ENCODE measurements at regions of chr1 and their contacts with region 1.

Region 1: GRCh38 chr1:205211169-205211838 is at the start of gene DSTYK:
- DNase-seq: peak; percentile 90 to 97 (median 95)
- H3K4me3 ChIP-seq: peak within 1 kb of the TSS; percentile 67 to 100 (median 96)
- H3K27ac ChIP-seq: peak within 1 kb of the TSS; percentile 78 to 99 (median 94)
- H3K27me3 ChIP-seq: no peaks in the 10 kb centered on the region
- CTCF ChIP-seq: peak in 40 of 56 donors; percentile 10 to 60 (median 40)
- total RNA-seq, gene DSTYK: 28.0 to 49.3 (median 39.9) TPM

Region 2: GRCh38 chr1:205121660-205122488 is 89.4 kb before region 1 on chr1 and contains the start of gene RBBP5:
- intact Hi-C with region 1: loop called (anchors 1 to 2 kb)
- DNase-seq: peak; percentile 92 to 97 (median 95)
- H3K4me3 ChIP-seq: peak within 1 kb of the TSS; percentile 72 to 100 (median 92)
- H3K27ac ChIP-seq: peak within 1 kb of the TSS; percentile 86 to 100 (median 98)
- H3K27me3 ChIP-seq: no peaks in the 10 kb centered on the region
- CTCF ChIP-seq: peak; percentile 39 to 91 (median 75)
- total RNA-seq, gene RBBP5: 14.3 to 46.6 (median 24.8) TPM

Region 3: GRCh38 chr1:205141236-205142101 is 69.8 kb before region 1 on chr1:
- intact Hi-C with region 1: loop called in 1 of 2 experiments (anchors 5 kb)
- DNase-seq: peak; percentile 47 to 88 (median 72)
- H3K4me3 ChIP-seq: peak overlapping the region in 32 of 59 donors; percentile 1 to 52 (median 23)
- H3K27ac ChIP-seq: peak overlapping the region in 45 of 59 donors; percentile 13 to 71 (median 46)
- H3K27me3 ChIP-seq: no peaks in the 10 kb centered on the region
- CTCF ChIP-seq: peak; percentile 64 to 92 (median 84)

Region 4: DNA sequence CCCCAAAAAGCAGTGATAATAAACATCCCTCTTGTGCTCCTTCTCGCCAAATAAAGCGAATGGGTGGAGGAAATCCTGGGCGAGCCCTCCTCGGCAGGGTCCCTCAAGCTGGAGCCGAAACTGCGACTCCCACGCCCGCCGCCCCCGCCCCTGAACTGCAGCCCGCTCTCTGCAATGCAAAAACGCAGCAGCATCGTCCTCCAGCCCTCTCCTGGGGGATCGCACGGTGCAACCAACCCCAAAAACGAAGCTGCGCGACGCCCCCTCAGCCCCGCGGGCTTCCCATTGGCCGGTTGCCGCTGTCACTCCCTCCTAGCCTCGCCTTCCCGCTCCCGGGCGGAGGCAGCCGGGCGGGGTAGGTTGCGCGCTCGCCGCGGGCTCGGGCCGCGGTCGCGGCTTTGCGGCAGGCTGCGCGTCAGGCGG is 16.3 kb after region 1 on chr1 and contains the start of gene TMCC2:
- intact Hi-C with region 1: loop called (anchors 1 kb)
- DNase-seq: peak; percentile 91 to 99 (median 95)
- H3K4me3 ChIP-seq: peak within 1 kb of the TSS; percentile 67 to 90 (median 78)
- H3K27ac ChIP-seq: peak within 1 kb of the TSS; percentile 70 to 100 (median 92)
- H3K27me3 ChIP-seq: no peaks in the 10 kb centered on the region
- CTCF ChIP-seq: peak in 11 of 56 donors; percentile 8 to 46 (median 21)
- total RNA-seq, gene TMCC2: 52.9 to 143 (median 93.9) TPM

Region 5: DNA sequence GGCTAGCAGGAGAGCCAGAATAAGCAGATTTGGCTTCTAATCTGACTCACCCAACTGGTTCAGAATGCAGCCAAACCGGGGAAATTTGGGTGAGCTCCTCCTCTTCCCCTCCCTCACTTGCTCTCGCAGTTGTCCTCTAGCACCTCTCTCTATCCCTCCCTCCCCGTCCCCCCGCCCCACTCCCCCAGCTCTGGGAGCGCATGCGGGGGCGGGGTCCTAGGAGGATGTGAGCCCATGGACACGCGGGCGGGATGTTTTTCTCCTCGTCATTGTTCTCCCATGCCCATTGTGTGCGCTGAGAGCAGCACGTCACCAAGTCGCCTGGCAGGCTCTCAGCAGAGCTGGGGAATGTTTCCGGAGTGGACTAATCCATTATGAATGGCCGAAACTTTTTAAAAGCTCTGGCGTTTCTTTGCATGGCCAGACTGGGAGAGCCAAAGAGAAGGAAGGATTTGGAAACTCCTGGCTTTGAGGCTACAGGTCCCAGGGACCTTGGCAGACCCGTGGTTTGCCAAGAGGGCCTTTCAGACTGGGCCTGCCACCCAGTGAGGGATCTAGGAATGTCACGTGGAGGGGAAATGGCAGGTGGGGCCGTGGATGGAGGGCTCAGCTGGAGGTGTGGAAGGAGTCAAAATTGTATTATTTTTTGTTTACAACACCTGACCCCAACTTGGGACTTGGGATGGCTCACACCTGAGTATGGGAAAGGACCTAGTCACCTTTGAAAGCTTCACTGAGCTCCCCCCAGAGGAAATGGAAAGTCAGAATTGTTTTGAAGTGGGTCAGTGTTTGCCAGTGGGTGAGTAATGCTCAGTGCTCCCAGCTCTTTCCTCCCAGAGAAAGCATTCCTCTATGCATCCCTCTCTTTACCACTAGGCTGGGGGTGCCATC is 332.4 kb after region 1 on chr1:
- intact Hi-C with region 1: no loop called
- DNase-seq: peak; percentile 58 to 92 (median 84)
- H3K4me3 ChIP-seq: peak overlapping the region; percentile 26 to 66 (median 52)
- H3K27ac ChIP-seq: peak overlapping the region in 52 of 59 donors; percentile 9 to 84 (median 70)
- H3K27me3 ChIP-seq: no peaks in the 10 kb centered on the region
- CTCF ChIP-seq: peak in 10 of 56 donors; percentile 1 to 31 (median 16)